ENCODE measurements at regions of chr2 and their contacts with region 1.

Region 1: GRCh38 chr2:238256594-238257104 is 16.8 kb upstream of the HES6 start:
- DNase-seq: peak; percentile 87 to 95 (median 92)
- ATAC-seq: peak; percentile 93 to 99 (median 98)
- H3K4me3 ChIP-seq: no peak overlapping the region
- H3K27ac ChIP-seq: peak overlapping the region in 1 of 4 donors; percentile 8
- H3K4me1 ChIP-seq: peaks cover 0 to 6% (median 5%) of the 10 kb centered on the region in 3 donors
- H3K27me3 ChIP-seq: no peaks in the 10 kb centered on the region
- CTCF ChIP-seq: peak; percentile 85 to 98 (median 92)

Region 2: DNA sequence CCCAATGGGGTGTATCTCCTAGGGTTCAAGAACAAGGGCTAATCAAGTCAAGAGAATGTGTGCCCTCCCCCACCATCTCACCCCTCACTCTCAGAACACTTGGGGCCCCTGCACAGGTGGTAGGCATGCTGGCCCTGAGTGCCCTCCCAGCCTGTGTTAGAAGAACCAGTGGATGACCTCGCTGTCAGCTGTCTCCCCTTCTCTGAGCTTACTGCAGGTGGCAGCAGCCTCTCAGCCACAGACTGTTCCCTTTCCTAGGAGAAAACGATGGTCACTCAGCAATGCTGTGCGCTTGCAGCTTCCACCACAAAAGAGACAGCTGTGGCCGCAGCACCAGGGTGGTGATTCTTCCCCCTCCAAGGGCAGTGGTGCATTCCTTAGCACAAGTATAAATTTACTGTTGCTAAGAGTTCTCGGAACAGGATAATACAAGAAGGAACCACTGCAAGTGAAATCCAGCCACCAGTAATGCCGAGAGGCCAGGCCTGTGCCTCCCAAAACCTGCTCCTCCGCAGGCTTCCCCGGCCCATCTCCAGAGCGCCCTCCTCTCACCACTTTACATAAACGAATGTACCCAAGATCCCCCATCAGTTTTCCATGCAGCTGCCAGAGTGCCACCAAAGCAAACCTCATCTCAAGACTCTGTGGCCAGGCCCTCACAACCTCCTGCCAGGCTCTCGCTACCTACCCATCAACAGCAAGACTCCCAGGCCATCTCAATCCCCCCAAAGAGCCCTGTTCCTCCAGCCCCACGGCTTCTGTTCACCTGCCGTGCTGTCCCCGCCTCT is 398.2 kb before region 1 on chr2:
- intact Hi-C with region 1: loop called in 1 of 3 experiments (anchors 5 kb)
- DNase-seq: peak; percentile 69 to 84 (median 80)
- ATAC-seq: peak; percentile 55 to 82 (median 77)
- H3K4me3 ChIP-seq: peak overlapping the region in 3 of 4 donors; percentile 60 to 73 (median 69)
- H3K27ac ChIP-seq: peak overlapping the region; percentile 89 to 94 (median 92)
- H3K4me1 ChIP-seq: peaks cover 17 to 27% (median 24%) of the 10 kb centered on the region in 3 donors
- H3K27me3 ChIP-seq: no peaks in the 10 kb centered on the region
- CTCF ChIP-seq: peak; percentile 41 to 66 (median 55)

Region 3: GRCh38 chr2:238326801-238327365 is 70.2 kb after region 1 on chr2:
- intact Hi-C with region 1: loop called in 2 of 3 experiments (anchors 5 to 10 kb)
- DNase-seq: no peak
- ATAC-seq: no peak
- H3K4me3 ChIP-seq: no peak overlapping the region
- H3K27ac ChIP-seq: no peak overlapping the region
- H3K4me1 ChIP-seq: peaks cover 0 to 1% (median 0%) of the 10 kb centered on the region in 3 donors
- H3K27me3 ChIP-seq: no peaks in the 10 kb centered on the region
- CTCF ChIP-seq: no peak